Activated CD4-positive, alpha-beta T cell treated with anti-CD3 and anti-CD28 coated beads for 36 hours (primary cell): ENCODE measurements at regions of chr11 and their contacts with region 1.

Region 1: DNA sequence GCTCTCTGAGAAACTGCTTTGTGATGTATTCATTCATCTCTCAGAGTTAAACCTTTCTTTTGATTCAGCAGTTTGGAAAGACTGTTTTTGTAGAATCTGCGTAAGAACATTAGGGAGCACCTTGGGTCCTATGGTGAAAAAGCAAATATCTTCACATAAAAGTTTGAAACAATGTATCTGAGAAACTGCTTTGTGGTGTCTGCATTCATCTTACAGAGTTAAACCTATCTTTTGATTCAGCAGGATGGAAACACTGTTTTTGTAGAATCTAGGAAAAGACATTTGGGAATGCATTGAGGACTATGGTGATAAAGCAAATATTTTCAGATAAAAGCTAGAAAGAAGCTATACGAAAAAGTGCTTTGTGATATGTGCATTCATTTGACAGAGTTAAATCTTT is 361.3 kb downstream of the OR4C45 start:
- DNase-seq: no peak
- ATAC-seq: no peak
- H3K4me3 Mint-ChIP-seq: no peak overlapping the region
- H3K27ac Mint-ChIP-seq: no peak overlapping the region
- H3K4me1 Mint-ChIP-seq: no peaks in the 10 kb centered on the region
- H3K27me3 Mint-ChIP-seq: no peaks in the 10 kb centered on the region

Region 2: GRCh38 chr11:50412832-50413231 is 18.8 kb after region 1 on chr11:
- CTCF ChIA-PET with region 1: no interaction called
- POLR2A ChIA-PET with region 1: no interaction called
- intact Hi-C with region 1: loop called in 1 of 2 experiments (anchors 2 kb)
- DNase-seq: no peak
- ATAC-seq: no peak
- H3K4me3 Mint-ChIP-seq: no peak overlapping the region
- H3K27ac Mint-ChIP-seq: no peak overlapping the region
- H3K4me1 Mint-ChIP-seq: no peaks in the 10 kb centered on the region
- H3K27me3 Mint-ChIP-seq: no peaks in the 10 kb centered on the region